Activated CD4-positive, alpha-beta T cell treated with anti-CD3 and anti-CD28 coated beads, Interleukin-2, amount 10 ng/mL, durations not matched to agents 24 days and 14 days (primary cell): ENCODE measurements at regions of chr4 and their contacts with region 1.

Region 1: GRCh38 chr4:26020083-26020668 is 106.2 kb downstream of the SMIM20 start:
- DNase-seq: peak; percentile 65
- H3K4me3 Mint-ChIP-seq: peak overlapping the region; percentile 27
- H3K27ac Mint-ChIP-seq: peak overlapping the region; percentile 61
- H3K4me1 Mint-ChIP-seq: peaks cover 18% of the 10 kb centered on the region
- H3K27me3 Mint-ChIP-seq: peaks cover 3% of the 10 kb centered on the region

Region 2: GRCh38 chr4:25991340-25991739 is 28.8 kb before region 1 on chr4:
- intact Hi-C with region 1: no loop called
- DNase-seq: no peak
- H3K4me3 Mint-ChIP-seq: no peak overlapping the region
- H3K27ac Mint-ChIP-seq: no peak overlapping the region
- H3K4me1 Mint-ChIP-seq: peaks cover 15% of the 10 kb centered on the region
- H3K27me3 Mint-ChIP-seq: no peaks in the 10 kb centered on the region

Region 3: GRCh38 chr4:26009502-26009901 is 10.7 kb before region 1 on chr4:
- intact Hi-C with region 1: loop called (anchors 1 kb)
- DNase-seq: no peak
- H3K4me3 Mint-ChIP-seq: no peak overlapping the region
- H3K27ac Mint-ChIP-seq: no peak overlapping the region
- H3K4me1 Mint-ChIP-seq: peaks cover 10% of the 10 kb centered on the region
- H3K27me3 Mint-ChIP-seq: peaks cover 24% of the 10 kb centered on the region

Region 4: GRCh38 chr4:26299254-26299882 is 279.2 kb after region 1 on chr4:
- intact Hi-C with region 1: no loop called
- DNase-seq: no peak
- H3K4me3 Mint-ChIP-seq: peak overlapping the region; percentile 41
- H3K27ac Mint-ChIP-seq: peak overlapping the region; percentile 7
- H3K4me1 Mint-ChIP-seq: peaks cover 27% of the 10 kb centered on the region
- H3K27me3 Mint-ChIP-seq: no peaks in the 10 kb centered on the region